Activated B cell treated with CpG ODN at 0.5 μM for 24 hours (primary cell): ENCODE measurements at regions of chr9 and their contacts with region 1.

Region 1: DNA sequence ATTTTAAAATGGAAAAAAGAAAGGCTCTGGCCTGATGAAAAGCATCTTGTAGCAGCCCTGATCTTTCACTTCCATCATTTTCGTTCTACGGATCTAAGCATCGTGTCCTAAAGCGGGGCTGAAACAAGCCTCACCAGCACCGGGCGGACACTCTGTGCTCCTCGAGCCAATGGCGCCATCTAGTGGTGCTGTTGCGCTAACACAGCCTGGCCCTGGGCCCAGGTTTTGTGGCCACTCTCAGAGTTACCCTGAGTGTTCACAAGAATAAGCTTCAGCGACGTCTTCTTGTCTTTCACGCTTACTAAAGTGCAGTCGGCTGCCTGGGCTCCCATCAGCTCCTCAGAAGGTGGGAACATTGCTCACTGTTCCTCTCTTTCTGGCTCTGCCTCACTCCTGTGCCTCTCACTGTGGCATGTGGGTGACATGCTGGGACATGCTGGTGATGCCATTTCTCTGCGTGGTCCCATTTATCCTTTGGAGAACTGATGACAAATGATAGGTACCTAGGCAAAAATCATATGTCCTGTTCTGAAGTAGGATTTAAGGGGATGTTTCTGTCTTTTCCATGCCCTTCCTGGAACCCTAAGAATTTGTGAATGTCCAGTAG is 32.7 kb downstream of the DMRT3 start:
- DNase-seq: peak; percentile 52
- ATAC-seq: peak; percentile 95
- H3K4me3 Mint-ChIP-seq: no peak overlapping the region
- H3K27ac Mint-ChIP-seq: no peak overlapping the region
- H3K4me1 Mint-ChIP-seq: no peaks in the 10 kb centered on the region
- H3K27me3 Mint-ChIP-seq: peaks cover 29% of the 10 kb centered on the region
- CTCF ChIP-seq: peak; percentile 64

Region 2: DNA sequence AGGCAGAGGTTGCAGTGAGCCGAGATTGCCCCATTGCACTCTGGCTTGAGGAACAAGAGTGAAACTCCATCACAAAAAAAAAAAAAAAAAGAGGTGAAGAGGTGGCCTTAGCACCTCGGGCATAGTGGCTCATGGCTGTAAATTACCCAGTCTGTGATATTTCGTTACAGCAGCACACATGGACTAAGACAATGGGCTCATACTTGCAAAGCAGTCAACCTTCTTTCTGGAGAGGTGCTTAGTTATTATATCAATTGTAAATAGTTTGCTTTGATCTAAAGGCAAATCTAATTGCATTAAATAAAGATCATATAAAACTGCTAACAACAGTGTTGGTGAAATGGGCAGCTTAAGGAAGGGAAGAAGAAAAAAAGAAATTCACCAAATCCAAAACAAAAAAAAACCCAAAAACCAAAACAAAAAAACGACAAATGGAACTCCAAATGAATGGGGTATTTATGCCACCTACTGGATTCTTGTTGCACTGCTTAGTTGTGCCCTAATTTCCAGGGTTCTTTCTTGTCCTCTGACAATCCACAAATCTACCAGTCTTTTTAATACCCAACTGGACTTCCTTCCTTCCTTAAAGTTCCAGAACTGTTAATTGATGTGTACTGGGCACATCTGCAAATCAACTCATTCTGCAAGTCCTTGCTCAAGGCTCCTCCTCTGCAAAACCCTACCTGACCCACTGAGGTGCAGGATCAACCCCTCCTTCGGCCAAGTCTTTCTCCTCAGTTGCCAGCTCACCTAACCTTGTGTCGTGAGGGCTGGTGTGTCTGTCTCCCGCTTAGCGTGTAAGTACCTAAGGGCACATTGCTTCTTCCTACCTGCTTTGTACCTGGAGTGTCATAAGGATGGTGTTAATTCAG is 202.7 kb before region 1 on chr9:
- CTCF ChIA-PET with region 1: no interaction called
- POLR2A ChIA-PET with region 1: no interaction called
- intact Hi-C with region 1: no loop called
- DNase-seq: no peak
- ATAC-seq: no peak
- H3K4me3 Mint-ChIP-seq: no peak overlapping the region
- H3K27ac Mint-ChIP-seq: no peak overlapping the region
- H3K4me1 Mint-ChIP-seq: no peaks in the 10 kb centered on the region
- H3K27me3 Mint-ChIP-seq: no peaks in the 10 kb centered on the region
- CTCF ChIP-seq: no peak

Region 3: GRCh38 chr9:893843-894420 is 115.3 kb before region 1 on chr9:
- CTCF ChIA-PET with region 1: interaction called, 22 read pairs
- POLR2A ChIA-PET with region 1: no interaction called
- intact Hi-C with region 1: loop called (anchors 1 kb)
- DNase-seq: peak; percentile 38
- ATAC-seq: peak; percentile 98
- H3K4me3 Mint-ChIP-seq: no peak overlapping the region
- H3K27ac Mint-ChIP-seq: peak overlapping the region; percentile 47
- H3K4me1 Mint-ChIP-seq: peaks cover 13% of the 10 kb centered on the region
- H3K27me3 Mint-ChIP-seq: peaks cover 18% of the 10 kb centered on the region
- CTCF ChIP-seq: no peak